ENCODE measurements at regions of chr20 and their contacts with region 1.

Region 1: GRCh38 chr20:23357767-23358591 is 4.0 kb upstream of the GZF1 start:
- DNase-seq: peak; percentile 99
- H3K4me3 Mint-ChIP-seq: peak overlapping the region; percentile 86
- H3K27ac Mint-ChIP-seq: peak overlapping the region; percentile 83
- H3K4me1 Mint-ChIP-seq: peaks cover 4% of the 10 kb centered on the region
- H3K27me3 Mint-ChIP-seq: no peaks in the 10 kb centered on the region
- CTCF ChIP-seq: no peak

Region 2: GRCh38 chr20:22763257-22763906 is 594.6 kb before region 1 on chr20:
- CTCF ChIA-PET with region 1: no interaction called
- POLR2A ChIA-PET with region 1: interaction called, 12 read pairs
- intact Hi-C with region 1: no loop called
- DNase-seq: peak; percentile 81
- H3K4me3 Mint-ChIP-seq: peak overlapping the region; percentile 70
- H3K27ac Mint-ChIP-seq: peak overlapping the region; percentile 95
- H3K4me1 Mint-ChIP-seq: peaks cover 20% of the 10 kb centered on the region
- H3K27me3 Mint-ChIP-seq: no peaks in the 10 kb centered on the region
- CTCF ChIP-seq: no peak

Region 3: GRCh38 chr20:23374441-23374840 is 16.5 kb after region 1 on chr20:
- CTCF ChIA-PET with region 1: interaction called, 4 read pairs
- POLR2A ChIA-PET with region 1: interaction called, 10 read pairs
- intact Hi-C with region 1: no loop called
- DNase-seq: no peak
- H3K4me3 Mint-ChIP-seq: no peak overlapping the region
- H3K27ac Mint-ChIP-seq: no peak overlapping the region
- H3K4me1 Mint-ChIP-seq: no peaks in the 10 kb centered on the region
- H3K27me3 Mint-ChIP-seq: no peaks in the 10 kb centered on the region
- CTCF ChIP-seq: no peak

Region 4: GRCh38 chr20:23622839-23623343 is 264.9 kb after region 1 on chr20:
- CTCF ChIA-PET with region 1: no interaction called
- POLR2A ChIA-PET with region 1: interaction called, 11 read pairs
- intact Hi-C with region 1: loop called (anchors 5 kb)
- DNase-seq: peak; percentile 94
- H3K4me3 Mint-ChIP-seq: peak overlapping the region; percentile 61
- H3K27ac Mint-ChIP-seq: peak overlapping the region; percentile 92
- H3K4me1 Mint-ChIP-seq: peaks cover 43% of the 10 kb centered on the region
- H3K27me3 Mint-ChIP-seq: no peaks in the 10 kb centered on the region
- CTCF ChIP-seq: no peak

Region 5: DNA sequence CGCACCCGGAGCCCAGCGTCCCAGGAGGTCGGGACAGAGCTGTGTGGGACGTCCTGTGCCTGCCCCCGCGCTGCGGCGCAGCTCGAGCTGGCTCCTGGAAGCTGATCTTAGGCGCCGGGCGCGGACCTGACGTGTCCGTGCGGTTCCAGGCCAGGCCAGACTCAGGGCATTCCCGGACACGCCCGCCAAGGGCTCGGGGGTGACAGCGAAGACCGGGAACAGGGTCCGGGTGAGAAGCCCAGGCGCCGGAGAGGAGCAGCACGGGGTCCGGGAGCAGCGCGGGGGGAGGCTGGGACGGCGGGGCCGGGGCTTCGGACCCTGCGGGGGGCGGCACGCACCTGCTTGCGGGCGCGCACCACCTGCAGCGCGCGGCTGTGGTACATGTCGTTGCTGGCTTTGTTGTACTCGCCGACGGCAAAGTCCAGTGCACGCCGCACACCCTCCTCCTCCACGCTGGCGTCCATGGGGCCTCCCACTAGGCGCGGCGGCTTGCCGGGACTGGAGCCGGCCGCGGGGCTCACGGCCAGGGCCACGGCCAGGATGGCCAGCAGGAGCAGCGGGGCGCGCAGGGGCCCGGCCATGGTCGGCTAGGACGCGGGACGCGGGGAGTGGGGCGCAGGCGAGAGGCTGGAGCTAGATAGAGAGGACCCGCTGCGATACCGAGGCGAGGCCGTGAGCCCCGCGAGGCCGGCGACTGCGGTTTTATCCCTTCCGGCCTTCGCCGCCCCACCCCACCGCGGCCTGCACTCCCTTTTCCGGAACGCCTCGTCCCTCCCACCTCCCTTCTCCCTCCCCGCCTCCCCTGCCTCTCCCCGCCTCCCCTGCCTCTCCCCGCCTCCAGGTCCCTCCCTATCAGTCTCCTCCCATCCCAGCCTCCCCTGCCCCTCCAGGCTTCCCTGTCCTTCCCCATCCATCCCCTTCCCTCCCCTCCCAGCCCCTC is 279.6 kb after region 1 on chr20 and contains the start of gene CST3:
- CTCF ChIA-PET with region 1: no interaction called
- POLR2A ChIA-PET with region 1: interaction called, 11 read pairs
- intact Hi-C with region 1: no loop called
- DNase-seq: peak; percentile 91
- H3K4me3 Mint-ChIP-seq: peak within 1 kb of the TSS; percentile 91
- H3K27ac Mint-ChIP-seq: peak within 1 kb of the TSS; percentile 90
- H3K4me1 Mint-ChIP-seq: peaks cover 42% of the 10 kb centered on the region
- H3K27me3 Mint-ChIP-seq: no peaks in the 10 kb centered on the region
- CTCF ChIP-seq: no peak
- total RNA-seq, gene CST3: 303 and 315 TPM in 2 replicates

Measured in MCF 10A (cell line).